Activated CD4-positive, alpha-beta T cell treated with anti-CD3 and anti-CD28 coated beads, Interleukin-2, amount 10 ng/mL, durations not matched to agents 24 days and 14 days (primary cell): ENCODE measurements at regions of chr22 and their contacts with region 1.

Region 1: DNA sequence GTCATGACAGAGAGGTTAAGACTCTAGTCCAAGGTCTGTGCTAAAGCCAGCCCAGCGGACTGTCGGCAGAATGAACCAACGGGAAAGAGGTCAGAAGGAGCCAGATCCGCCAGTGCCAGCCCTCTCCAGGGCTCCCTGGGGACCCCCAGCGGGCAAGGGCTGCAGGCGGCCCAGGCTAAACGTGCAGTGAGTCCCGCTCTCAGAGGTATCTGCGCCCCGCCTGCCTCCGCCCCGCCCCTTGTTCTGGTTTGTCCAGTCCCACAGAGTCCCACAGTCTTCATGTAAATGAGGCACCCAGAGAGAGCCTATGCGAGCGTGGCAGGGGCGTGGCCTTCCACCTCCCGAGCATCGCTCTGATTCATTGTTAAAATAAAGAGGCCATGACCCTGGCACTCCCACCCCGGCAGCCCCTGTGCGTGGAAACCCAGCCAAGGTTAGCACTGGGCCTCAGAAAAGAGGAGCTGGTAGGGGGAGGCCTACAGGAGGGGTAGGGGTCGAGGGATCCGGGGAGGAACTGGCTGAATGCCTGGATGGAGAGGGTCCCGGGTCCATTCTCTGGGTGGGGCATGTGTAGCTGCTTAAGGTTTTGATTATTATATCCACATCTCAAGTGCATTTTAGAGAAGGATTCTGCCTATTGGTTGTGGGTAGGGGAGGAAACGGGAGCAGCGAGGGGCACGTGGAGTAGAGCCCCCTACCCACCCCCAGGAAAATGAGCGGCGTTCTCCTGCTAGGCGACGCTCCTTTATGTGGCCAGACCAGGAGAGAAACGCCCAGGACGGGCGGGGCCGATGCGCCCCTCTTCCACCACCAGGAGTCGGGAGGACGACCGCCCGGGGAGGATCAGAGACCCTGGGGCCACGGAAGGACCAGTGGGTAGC is at the start of gene TRIOBP:
- DNase-seq: peak; percentile 97
- H3K4me3 Mint-ChIP-seq: peak within 1 kb of the TSS; percentile 75
- H3K27ac Mint-ChIP-seq: peak within 1 kb of the TSS; percentile 58
- H3K4me1 Mint-ChIP-seq: peaks cover 13% of the 10 kb centered on the region
- H3K27me3 Mint-ChIP-seq: no peaks in the 10 kb centered on the region
- total RNA-seq, gene TRIOBP: 33.3 and 34.8 TPM in 2 replicates

Region 2: DNA sequence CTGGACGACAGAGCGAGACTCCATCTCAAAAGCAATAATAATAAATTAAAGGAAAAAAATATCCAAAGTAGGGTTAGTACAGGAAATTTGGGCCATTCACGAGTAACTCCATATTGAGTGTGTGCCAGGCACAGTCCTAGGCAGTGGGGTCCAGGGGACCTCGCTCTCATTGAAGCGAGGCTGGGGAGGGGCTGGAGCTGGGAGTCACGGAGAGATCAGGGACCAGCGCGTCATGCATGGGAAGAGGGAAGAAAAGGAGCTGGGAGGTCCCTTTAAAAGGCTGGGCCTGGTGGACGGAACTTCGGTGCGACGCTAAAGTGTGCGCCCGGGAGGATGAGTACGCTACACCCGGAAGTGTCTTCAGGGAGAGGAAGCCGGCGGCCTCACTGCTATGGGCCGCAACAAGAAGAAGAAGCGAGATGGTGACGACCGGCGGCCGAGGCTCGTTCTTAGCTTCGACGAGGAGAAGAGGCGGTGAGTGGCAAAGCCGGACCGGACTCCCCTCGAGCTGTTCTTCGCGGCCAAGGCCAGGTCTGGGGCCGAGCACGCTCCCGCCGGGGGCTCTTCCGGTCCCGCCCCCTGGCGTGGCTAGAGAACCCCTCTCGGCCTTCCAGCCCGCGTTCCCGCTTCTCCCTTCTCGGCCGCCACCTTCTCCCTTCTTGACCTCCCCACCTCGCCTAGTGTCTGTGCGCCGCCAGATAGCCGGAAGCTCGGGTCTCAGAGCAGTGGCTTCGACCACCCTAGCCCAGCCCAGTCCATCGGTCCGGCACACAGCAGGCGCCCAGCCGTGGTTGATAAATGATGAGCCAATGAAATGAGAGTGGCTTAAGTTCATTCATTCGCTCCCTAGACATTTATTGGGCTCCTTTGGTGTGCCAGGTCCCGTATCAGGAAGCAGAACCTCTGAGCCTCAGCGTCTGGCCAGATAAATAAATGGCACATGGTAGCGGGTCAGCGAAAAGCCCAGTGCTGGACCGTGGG is 10.6 kb before region 1 on chr22 and contains the start of gene NOL12:
- intact Hi-C with region 1: loop called (anchors 1 kb)
- DNase-seq: peak; percentile 94
- H3K4me3 Mint-ChIP-seq: peak within 1 kb of the TSS; percentile 95
- H3K27ac Mint-ChIP-seq: peak within 1 kb of the TSS; percentile 90
- H3K4me1 Mint-ChIP-seq: peaks cover 19% of the 10 kb centered on the region
- H3K27me3 Mint-ChIP-seq: no peaks in the 10 kb centered on the region
- total RNA-seq, gene NOL12: 67.9 and 70.3 TPM in 2 replicates

Region 3: GRCh38 chr22:39135090-39135896 is 1438.4 kb after region 1 on chr22:
- intact Hi-C with region 1: no loop called
- DNase-seq: peak; percentile 78
- H3K4me3 Mint-ChIP-seq: no peak overlapping the region
- H3K27ac Mint-ChIP-seq: no peak overlapping the region
- H3K4me1 Mint-ChIP-seq: peaks cover 4% of the 10 kb centered on the region
- H3K27me3 Mint-ChIP-seq: no peaks in the 10 kb centered on the region